ENCODE measurements at regions of chr10 and their contacts with region 1.

Region 1: DNA sequence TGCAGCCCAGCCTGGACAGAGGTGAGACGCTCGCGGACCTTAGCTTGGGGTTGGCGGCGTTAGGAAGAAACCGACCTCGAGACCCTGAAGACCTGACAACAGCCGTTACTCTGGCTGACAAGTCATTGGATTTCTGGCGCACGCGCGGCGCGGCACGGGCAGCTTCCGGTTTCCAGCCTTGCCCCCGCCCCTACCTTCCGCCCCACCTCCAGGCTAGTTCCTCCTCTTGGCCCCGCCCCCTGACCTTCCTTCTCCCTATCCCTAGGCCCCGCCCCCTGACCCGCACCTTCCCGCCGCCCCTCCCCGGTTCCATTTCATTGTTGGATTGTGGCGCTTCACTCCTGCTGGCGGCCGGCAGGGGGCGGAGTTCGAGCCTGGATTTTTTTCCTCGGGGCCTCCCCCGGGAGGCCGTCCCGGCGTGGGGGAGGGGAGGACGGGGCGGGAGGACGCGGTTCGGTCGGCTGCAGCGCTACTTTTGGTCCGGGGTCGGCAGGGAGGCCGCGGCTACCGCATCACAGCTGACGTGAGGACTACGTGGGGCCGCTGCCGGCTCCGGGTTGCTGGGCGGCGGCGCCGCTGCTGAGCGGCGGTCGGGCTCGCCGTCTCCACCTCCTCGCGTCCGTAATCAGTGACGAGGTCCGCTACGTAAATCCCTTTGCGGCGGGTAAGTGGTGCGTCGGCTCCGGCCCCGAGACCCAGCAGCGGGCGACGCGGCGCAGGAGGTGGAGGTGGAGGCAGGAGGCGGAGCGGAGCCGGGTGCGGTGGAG is at the start of gene CREM:
- DNase-seq: peak; percentile 99 to 100
- ATAC-seq: peak; percentile 90 to 93
- H3K4me3 ChIP-seq: peak within 1 kb of the TSS; percentile 68 to 89 (median 82)
- H3K27ac ChIP-seq: peak within 1 kb of the TSS; percentile 93 to 98 (median 96)
- H3K4me1 ChIP-seq: peaks cover 26 to 27% of the 10 kb centered on the region in 2 donors
- H3K27me3 ChIP-seq: no peaks in the 10 kb centered on the region
- CTCF ChIP-seq: peak; percentile 78 to 97 (median 93)
- POLR2A ChIP-seq: peak; percentile 99
- total RNA-seq, gene CREM: 24.3 to 42.5 (median 30.1) TPM

Region 2: DNA sequence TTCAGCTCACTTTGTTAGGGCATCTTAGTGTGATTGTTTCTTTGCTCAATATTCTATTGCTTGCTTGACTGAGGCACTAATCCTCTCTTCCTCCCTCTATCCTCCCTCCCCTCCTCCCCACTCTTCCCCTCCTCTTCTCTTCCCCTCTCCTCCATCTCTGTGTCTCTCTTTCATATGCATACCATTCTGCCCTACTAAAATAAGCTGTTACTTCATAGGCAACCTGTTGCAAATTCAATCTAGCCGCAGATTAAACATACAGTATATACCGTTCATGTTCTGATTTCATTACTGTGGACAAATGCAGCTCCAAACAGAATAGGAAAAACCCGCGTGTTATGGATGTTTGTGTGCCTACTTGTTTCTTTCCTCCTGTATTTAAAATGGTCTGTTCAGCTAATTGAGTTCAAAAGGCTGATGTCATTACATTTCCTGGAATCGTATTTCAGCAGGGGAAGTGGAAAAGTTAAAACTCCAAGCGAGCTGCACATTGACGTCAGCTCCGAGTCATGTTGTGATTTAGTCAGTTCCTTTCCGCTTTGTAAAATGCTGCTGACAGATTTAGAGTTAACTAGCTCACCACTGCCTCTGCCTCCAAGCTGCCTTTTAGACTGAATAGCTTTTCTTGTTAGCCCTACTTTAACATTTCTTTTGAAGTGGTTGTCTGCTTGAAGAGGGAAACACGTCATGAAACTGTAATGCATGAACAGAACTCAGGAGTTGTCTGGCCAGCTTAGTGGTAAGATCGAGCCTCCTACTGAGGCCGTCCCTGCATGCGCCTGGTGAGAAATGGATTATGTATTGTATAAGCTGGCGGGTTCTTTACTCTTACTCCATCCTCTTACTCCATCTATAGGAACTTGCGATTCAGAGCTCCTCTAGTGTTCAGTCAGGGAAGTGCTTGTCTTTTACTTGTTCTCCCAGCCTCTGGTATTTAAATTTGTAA is 68.9 kb after region 1 on chr10:
- in situ Hi-C with region 1: no loop called
- intact Hi-C with region 1: loop called (anchors 1 kb)
- DNase-seq: peak; percentile 40 to 50
- ATAC-seq: peak; percentile 85 to 90
- H3K4me3 ChIP-seq: peak overlapping the region; percentile 31 to 56 (median 49)
- H3K27ac ChIP-seq: peak overlapping the region; percentile 78 to 87 (median 82)
- H3K4me1 ChIP-seq: no peaks in the 10 kb centered on the region
- H3K27me3 ChIP-seq: no peaks in the 10 kb centered on the region
- CTCF ChIP-seq: peak; percentile 76 to 87 (median 86)
- POLR2A ChIP-seq: peak; percentile 29 to 69

Region 3: DNA sequence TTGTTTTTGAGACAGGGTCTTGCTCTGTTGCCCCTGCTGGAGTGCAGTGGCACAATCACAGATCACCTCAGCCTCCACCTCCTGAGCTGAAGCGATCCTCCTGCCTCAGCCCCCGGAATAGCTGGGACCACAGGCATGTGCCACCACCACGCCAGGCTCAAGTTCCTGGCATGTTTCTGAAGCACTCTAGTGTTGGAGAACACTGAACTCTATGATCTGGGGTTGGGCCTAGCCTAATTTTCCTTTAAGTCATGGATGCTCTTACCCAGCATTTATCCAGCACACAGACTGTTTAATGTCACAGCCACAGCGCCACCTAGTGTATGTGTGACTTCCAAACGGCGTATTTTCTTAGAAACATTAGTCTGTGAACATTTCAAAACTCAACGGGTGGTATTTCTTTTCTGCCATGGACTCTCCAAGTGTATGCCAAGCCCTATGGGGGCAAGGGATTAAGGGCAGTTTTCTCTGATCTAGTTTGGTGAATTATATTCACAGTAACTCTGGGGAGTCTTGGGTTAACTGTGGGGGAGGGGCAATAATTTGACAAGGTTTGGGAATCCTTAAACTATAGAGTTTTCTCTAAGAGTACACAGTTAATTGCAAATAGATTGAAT is 91.7 kb after region 1 on chr10:
- in situ Hi-C with region 1: loop called in 3 of 4 experiments (anchors 5 kb)
- intact Hi-C with region 1: loop called (anchors 2 kb)
- DNase-seq: peak; percentile 55 to 74
- ATAC-seq: peak; percentile 61 to 72
- H3K4me3 ChIP-seq: no peak overlapping the region
- H3K27ac ChIP-seq: peak overlapping the region; percentile 47 to 70 (median 58)
- H3K4me1 ChIP-seq: peaks cover 31 to 32% of the 10 kb centered on the region in 2 donors
- H3K27me3 ChIP-seq: no peaks in the 10 kb centered on the region
- CTCF ChIP-seq: peak; percentile 80 to 86 (median 83)
- POLR2A ChIP-seq: no peak

Region 4: DNA sequence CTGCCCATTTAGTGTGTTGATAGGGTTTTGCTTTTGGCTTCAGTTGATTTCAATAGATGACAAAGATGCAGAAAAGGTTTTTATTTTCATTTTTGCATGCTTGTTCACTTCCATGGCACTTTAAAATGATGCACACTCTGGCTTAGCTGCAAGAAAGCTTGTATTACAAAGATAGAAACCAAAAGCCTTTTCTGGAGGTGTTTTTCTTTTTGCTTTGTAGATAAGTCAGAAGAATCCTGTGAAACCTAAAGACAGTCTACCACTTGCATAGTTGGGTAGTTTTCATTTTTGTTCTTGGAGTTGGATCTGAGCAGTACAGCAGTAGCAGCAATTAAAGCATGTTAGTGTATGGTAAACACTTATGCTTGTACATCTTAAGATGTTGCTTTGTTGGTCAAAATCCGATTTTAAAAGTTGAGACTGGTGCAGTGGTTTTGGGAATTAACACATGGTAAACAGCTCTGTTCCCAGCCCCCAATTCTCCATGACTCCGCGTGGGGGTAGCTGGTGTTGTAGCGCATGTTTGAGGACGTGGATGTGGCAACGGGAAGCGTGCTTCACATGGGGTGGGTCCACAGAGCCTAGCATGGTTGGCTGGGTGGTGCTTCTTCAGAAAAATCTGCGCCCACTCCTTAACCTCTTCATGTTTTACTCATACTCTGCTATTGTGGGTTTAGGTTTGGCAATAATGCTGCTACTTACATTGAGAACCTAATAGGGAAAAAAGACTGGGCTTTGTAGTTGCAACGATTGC is 229.4 kb after region 1 on chr10:
- in situ Hi-C with region 1: no loop called
- intact Hi-C with region 1: loop called (anchors 5 kb)
- DNase-seq: no peak
- ATAC-seq: no peak
- H3K4me3 ChIP-seq: no peak overlapping the region
- H3K27ac ChIP-seq: no peak overlapping the region
- H3K4me1 ChIP-seq: peaks cover 32 to 36% of the 10 kb centered on the region in 2 donors
- H3K27me3 ChIP-seq: no peaks in the 10 kb centered on the region
- CTCF ChIP-seq: no peak
- POLR2A ChIP-seq: no peak

Region 5: DNA sequence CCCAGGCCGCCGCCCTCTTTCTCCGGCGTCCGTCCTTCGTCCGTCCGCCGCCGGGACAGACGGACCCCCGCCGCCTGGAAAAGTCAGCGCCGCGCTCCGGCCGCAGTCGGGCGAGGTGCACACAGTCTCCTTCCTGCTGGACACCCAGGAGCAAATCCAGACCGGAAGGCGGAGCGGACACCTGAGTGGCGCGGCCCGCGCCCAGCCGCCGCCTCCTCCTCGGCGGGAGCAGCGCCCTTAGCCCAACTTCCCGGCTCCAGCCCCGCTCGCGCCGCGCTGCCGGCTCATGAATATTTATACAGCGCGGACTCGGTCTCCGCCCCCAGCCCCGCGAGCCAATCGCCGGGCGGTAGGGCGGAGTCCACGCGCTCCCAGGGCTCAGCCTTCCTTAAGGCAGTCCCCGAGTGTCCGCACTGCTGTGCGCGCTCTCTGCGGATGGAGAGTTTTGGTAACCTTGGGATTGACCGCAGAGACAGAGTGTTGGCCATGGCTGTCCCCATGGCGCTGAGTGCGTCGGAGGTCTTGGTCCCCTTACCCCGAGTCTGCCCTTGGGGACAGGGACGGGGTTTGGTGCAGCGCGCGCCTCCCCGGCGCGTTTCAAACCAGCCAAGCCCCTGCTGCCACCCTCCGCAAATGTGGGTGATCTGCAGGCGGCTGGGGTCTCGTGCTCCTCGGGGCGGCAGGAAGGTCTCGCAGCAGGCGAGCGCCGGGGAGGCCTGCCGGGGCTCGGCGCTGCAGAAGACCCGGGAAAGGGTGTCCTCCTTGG is 515.5 kb after region 1 on chr10 and contains the start of gene FZD8:
- in situ Hi-C with region 1: no loop called
- intact Hi-C with region 1: loop called (anchors 1 kb)
- DNase-seq: peak; percentile 84 to 89
- ATAC-seq: peak; percentile 77 to 80
- H3K4me3 ChIP-seq: peak within 1 kb of the TSS; percentile 73 to 88 (median 80)
- H3K27ac ChIP-seq: peak within 1 kb of the TSS; percentile 81 to 95 (median 89)
- H3K4me1 ChIP-seq: peaks cover 4 to 17% of the 10 kb centered on the region in 2 donors
- H3K27me3 ChIP-seq: no peaks in the 10 kb centered on the region
- CTCF ChIP-seq: peak in 3 of 5 experiments; percentile 5 to 39 (median 9)
- POLR2A ChIP-seq: peak; percentile 93 to 98
- total RNA-seq, gene FZD8: 3.0 to 9.3 (median 4.1) TPM